ENCODE measurements at regions of chr1 and their contacts with region 1.

Region 1: GRCh38 chr1:93078986-93079654 is at the start of gene MTF2:
- DNase-seq: peak; percentile 84
- ATAC-seq: peak; percentile 84
- H3K4me3 ChIP-seq: peak within 1 kb of the TSS; percentile 96
- H3K27ac ChIP-seq: peak within 1 kb of the TSS; percentile 93
- H3K4me1 ChIP-seq: no peaks in the 10 kb centered on the region
- H3K27me3 ChIP-seq: no peaks in the 10 kb centered on the region
- CTCF ChIP-seq: 0 out of 6 replicates have a peak, but pooled peaks of 1 of the 3 experiments have one; percentile 1
- EP300 ChIP-seq: peak; percentile 42 to 48; a peak in 3 of 4 replicates
- POLR2A ChIP-seq: peak; percentile 97
- RAD21 ChIP-seq: no peak
- polyA plus RNA-seq, gene MTF2: 22.6 to 30.6 TPM

Region 2: GRCh38 chr1:93000751-93001175 is 78.4 kb before region 1 on chr1:
- CTCF ChIA-PET with region 1: no interaction called
- POLR2A ChIA-PET with region 1: no interaction called
- RAD21 ChIA-PET with region 1: no interaction called
- SMC1A ChIA-PET with region 1: no interaction called
- in situ Hi-C with region 1: no loop called
- intact Hi-C with region 1: no loop called
- DNase-seq: no peak
- ATAC-seq: peak; percentile 71
- H3K4me3 ChIP-seq: no peak overlapping the region
- H3K27ac ChIP-seq: no peak overlapping the region
- H3K4me1 ChIP-seq: peaks cover 6% of the 10 kb centered on the region
- H3K27me3 ChIP-seq: no peaks in the 10 kb centered on the region
- CTCF ChIP-seq: no peak
- EP300 ChIP-seq: no peak
- POLR2A ChIP-seq: no peak
- RAD21 ChIP-seq: no peak

Region 3: DNA sequence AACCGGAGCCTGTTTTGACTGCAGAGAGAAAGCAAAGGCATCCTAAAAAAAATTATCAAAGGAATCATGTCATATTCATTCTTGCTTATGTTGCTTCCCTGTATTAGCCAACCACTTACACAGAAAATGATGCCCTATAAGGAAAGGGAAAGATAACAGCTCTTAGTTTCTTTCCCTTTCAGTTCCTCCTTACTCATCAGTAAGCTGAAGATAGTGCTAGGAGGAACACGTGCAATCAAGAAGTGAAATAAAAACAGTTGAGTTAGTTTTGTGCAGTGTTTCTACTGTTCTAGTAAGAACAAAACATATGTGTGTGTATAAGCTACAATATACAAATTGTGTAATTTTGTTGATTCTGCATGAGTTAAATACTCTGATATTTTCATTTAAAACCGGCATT is 45.3 kb before region 1 on chr1:
- CTCF ChIA-PET with region 1: no interaction called
- POLR2A ChIA-PET with region 1: interaction called, 3 read pairs
- RAD21 ChIA-PET with region 1: interaction called, 6 read pairs
- SMC1A ChIA-PET with region 1: interaction called, 5 read pairs
- in situ Hi-C with region 1: no loop called
- intact Hi-C with region 1: loop called (anchors 1 kb)
- DNase-seq: peak; percentile 48
- ATAC-seq: peak; percentile 97
- H3K4me3 ChIP-seq: peak overlapping the region; percentile 41; the same call in 1 of the 2 replicates
- H3K27ac ChIP-seq: peak overlapping the region; percentile 59
- H3K4me1 ChIP-seq: peaks cover 25% of the 10 kb centered on the region
- H3K27me3 ChIP-seq: no peaks in the 10 kb centered on the region
- CTCF ChIP-seq: no peak
- EP300 ChIP-seq: no peak
- POLR2A ChIP-seq: no peak
- RAD21 ChIP-seq: no peak

Region 4: DNA sequence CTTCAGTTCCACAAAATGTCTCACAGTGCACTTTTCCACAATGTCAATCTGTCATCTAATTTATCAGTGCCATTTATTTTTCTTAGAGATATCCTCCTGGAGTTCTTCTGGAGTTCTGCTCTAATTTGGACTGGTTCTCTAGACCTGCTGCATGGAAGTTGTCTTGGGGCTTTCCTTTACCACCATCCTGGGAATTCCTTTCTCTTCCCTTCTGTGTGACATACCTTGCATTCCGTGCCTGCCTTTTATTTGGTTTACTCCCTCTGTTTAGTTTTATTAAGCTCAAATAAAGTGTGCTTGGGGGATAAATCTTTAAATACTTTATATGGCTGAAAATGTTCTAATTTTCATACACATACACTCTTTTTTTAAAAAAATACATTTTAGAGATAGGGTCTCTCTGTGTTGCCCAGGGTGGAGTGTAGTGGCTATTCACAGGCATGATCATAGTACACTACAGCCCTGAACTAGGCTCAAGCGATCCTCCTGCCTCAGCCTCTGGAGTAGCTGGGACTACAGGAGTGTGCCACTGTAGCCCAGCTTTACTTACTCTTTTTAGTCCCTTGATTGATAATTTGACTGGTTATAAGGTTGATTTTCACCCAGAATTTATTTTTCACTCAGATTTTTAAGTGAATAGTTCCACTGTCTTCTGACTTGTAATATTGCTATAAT is 14.3 kb after region 1 on chr1:
- CTCF ChIA-PET with region 1: interaction called, 20 read pairs
- POLR2A ChIA-PET with region 1: interaction called, 7 read pairs
- RAD21 ChIA-PET with region 1: interaction called, 36 read pairs
- SMC1A ChIA-PET with region 1: interaction called, 11 read pairs
- in situ Hi-C with region 1: no loop called
- intact Hi-C with region 1: no loop called
- DNase-seq: no peak
- ATAC-seq: peak; percentile 56
- H3K4me3 ChIP-seq: no peak overlapping the region
- H3K27ac ChIP-seq: no peak overlapping the region
- H3K4me1 ChIP-seq: no peaks in the 10 kb centered on the region
- H3K27me3 ChIP-seq: no peaks in the 10 kb centered on the region
- CTCF ChIP-seq: no peak
- EP300 ChIP-seq: no peak
- POLR2A ChIP-seq: no peak
- RAD21 ChIP-seq: no peak

Region 5: DNA sequence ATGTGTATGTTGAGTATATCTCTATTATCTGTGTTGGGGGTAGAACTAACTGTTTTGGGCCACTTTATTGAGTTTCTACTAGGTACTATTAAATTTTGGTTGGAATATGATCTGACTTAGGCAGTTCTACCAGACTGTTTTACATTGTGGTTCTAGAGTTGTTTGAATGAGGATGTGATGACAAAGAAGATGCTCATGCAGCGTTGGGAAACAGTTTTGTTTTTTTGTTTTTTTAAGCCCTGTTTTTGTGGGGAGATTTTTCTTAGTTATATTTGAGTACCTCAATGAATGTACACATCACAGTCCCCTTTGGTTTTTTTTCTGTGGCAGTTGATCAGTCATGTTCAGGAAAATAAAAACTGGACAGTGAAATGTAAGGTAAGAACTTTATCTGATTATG is 61.0 kb after region 1 on chr1:
- CTCF ChIA-PET with region 1: interaction called, 10 read pairs
- POLR2A ChIA-PET with region 1: interaction called, 5 read pairs
- RAD21 ChIA-PET with region 1: interaction called, 3 read pairs
- SMC1A ChIA-PET with region 1: interaction called, 3 read pairs
- in situ Hi-C with region 1: no loop called
- intact Hi-C with region 1: no loop called
- DNase-seq: no peak
- ATAC-seq: no peak
- H3K4me3 ChIP-seq: no peak overlapping the region
- H3K27ac ChIP-seq: no peak overlapping the region
- H3K4me1 ChIP-seq: no peaks in the 10 kb centered on the region
- H3K27me3 ChIP-seq: no peaks in the 10 kb centered on the region
- CTCF ChIP-seq: no peak
- EP300 ChIP-seq: no peak
- POLR2A ChIP-seq: no peak
- RAD21 ChIP-seq: no peak

Region 6: GRCh38 chr1:93179886-93180722 is 101.0 kb after region 1 on chr1 and contains the start of gene TMED5:
- CTCF ChIA-PET with region 1: interaction called, 10 read pairs
- POLR2A ChIA-PET with region 1: interaction called, 15 read pairs
- RAD21 ChIA-PET with region 1: interaction called, 10 read pairs
- SMC1A ChIA-PET with region 1: interaction called, 8 read pairs
- in situ Hi-C with region 1: no loop called
- intact Hi-C with region 1: loop called (anchors 1 kb)
- DNase-seq: peak; percentile 90
- ATAC-seq: peak; percentile 88
- H3K4me3 ChIP-seq: peak within 1 kb of the TSS; percentile 95
- H3K27ac ChIP-seq: peak within 1 kb of the TSS; percentile 99
- H3K4me1 ChIP-seq: no peaks in the 10 kb centered on the region; the same call in 1 of the 2 replicates
- H3K27me3 ChIP-seq: no peaks in the 10 kb centered on the region
- CTCF ChIP-seq: peak in 2 of 3 experiments; percentile 1 to 9; a peak in 2 of 6 replicates
- EP300 ChIP-seq: no peak; a peak in 1 of 4 replicates
- POLR2A ChIP-seq: peak; percentile 70
- RAD21 ChIP-seq: no peak
- polyA plus RNA-seq, gene TMED5: 18.5 to 19.9 TPM

Region 7: GRCh38 chr1:93244298-93245069 is 165.4 kb after region 1 on chr1:
- CTCF ChIA-PET with region 1: no interaction called
- POLR2A ChIA-PET with region 1: no interaction called
- RAD21 ChIA-PET with region 1: no interaction called
- SMC1A ChIA-PET with region 1: no interaction called
- in situ Hi-C with region 1: no loop called
- intact Hi-C with region 1: no loop called
- DNase-seq: no peak
- ATAC-seq: no peak
- H3K4me3 ChIP-seq: no peak overlapping the region
- H3K27ac ChIP-seq: no peak overlapping the region
- H3K4me1 ChIP-seq: no peaks in the 10 kb centered on the region
- H3K27me3 ChIP-seq: no peaks in the 10 kb centered on the region
- CTCF ChIP-seq: no peak
- EP300 ChIP-seq: no peak
- POLR2A ChIP-seq: no peak
- RAD21 ChIP-seq: no peak

Region 8: GRCh38 chr1:93304716-93305138 is 225.6 kb after region 1 on chr1:
- CTCF ChIA-PET with region 1: interaction called, 48 read pairs
- POLR2A ChIA-PET with region 1: no interaction called
- RAD21 ChIA-PET with region 1: interaction called, 25 read pairs
- SMC1A ChIA-PET with region 1: interaction called, 26 read pairs
- in situ Hi-C with region 1: no loop called
- intact Hi-C with region 1: no loop called
- DNase-seq: peak; percentile 12
- ATAC-seq: peak; percentile 82
- H3K4me3 ChIP-seq: no peak overlapping the region
- H3K27ac ChIP-seq: no peak overlapping the region
- H3K4me1 ChIP-seq: no peaks in the 10 kb centered on the region
- H3K27me3 ChIP-seq: no peaks in the 10 kb centered on the region
- CTCF ChIP-seq: peak; percentile 72 to 89 (median 88)
- EP300 ChIP-seq: no peak
- POLR2A ChIP-seq: no peak
- RAD21 ChIP-seq: peak; percentile 92